H1 (cell line): ENCODE measurements at regions of chr14 and their contacts with region 1.

Region 1: DNA sequence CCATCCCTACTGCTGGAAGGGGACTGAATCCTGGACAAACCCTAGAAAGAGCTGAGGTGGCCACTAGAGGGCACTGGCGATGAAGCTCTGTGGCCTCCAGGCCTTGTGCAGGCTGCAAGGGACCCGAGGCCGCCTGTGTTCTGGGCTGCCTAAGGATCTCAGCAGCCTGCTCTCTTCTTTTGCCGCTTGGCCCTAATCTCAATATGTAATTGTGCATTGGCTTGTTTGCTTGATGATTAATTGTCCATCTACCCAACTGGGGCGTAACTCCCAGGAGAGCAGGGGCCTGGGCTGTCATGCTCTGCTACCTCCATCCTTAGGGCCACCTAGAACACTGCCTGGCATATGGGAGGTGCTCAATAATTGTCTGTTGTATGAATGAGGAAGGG is 73.8 kb downstream of the SYNE3 start:
- DNase-seq: peak; percentile 53 to 86
- H3K4me3 ChIP-seq: no peak overlapping the region
- H3K27ac ChIP-seq: no peak overlapping the region
- H3K4me1 ChIP-seq: no peaks in the 10 kb centered on the region
- H3K27me3 ChIP-seq: no peaks in the 10 kb centered on the region
- CTCF ChIP-seq: peak; percentile 85 to 94 (median 89)
- EP300 ChIP-seq: no peak
- POLR2A ChIP-seq: no peak
- RAD21 ChIP-seq: peak; percentile 89 to 92

Region 2: DNA sequence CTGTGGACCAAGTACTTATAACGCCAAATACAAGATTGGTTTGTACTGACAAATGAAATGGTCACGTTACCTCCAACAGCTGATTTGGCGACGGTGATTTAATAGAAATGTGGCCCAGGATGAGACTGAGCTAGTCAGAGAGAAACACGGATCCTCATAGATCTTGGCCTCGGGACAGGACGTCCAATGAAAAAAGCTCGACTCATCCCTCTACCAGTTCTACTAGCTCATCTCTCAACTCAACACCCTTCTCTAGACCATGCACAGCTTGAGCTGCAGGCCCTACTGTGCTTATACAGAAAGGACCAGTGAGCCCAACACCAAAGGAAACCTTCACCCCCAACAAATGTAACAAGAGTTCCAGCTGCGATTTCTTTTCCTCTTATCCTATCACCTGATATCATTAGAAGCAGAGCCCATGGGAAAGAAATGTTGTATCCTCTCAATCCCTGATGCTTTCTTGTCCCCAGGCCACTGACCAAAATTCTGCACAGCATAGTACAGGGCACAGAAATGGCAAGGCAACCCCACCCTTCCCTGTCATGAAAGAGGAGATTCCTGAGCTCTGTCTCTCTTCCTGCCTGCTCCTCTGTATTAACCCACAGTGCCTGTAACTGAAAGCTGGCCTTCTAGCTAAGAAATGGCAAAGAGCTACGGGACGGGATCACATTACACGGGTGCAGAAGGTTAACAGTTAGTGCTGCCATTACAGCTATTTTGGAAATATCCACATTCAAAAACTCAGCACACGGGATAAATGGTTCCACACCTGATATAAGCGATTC is 324.5 kb before region 1 on chr14:
- CTCF ChIA-PET with region 1: no interaction called
- POLR2A ChIA-PET with region 1: no interaction called
- DNase-seq: no peak
- H3K4me3 ChIP-seq: 0 out of 8 replicates have a peak overlapping the region, but pooled peaks of 1 of the 4 experiments have one; percentile 5
- H3K27ac ChIP-seq: no peak overlapping the region
- H3K4me1 ChIP-seq: peaks cover 0 to 5% (median 3%) of the 10 kb centered on the region in 4 experiments; a peak in 2 of 7 replicates
- H3K27me3 ChIP-seq: no peaks in the 10 kb centered on the region
- CTCF ChIP-seq: no peak
- EP300 ChIP-seq: no peak
- POLR2A ChIP-seq: no peak
- RAD21 ChIP-seq: no peak

Region 3: GRCh38 chr14:95340201-95340697 is 102.4 kb before region 1 on chr14:
- CTCF ChIA-PET with region 1: no interaction called
- POLR2A ChIA-PET with region 1: no interaction called
- DNase-seq: no peak
- H3K4me3 ChIP-seq: no peak overlapping the region
- H3K27ac ChIP-seq: no peak overlapping the region
- H3K4me1 ChIP-seq: peaks cover 0 to 4% (median 0%) of the 10 kb centered on the region in 4 experiments; a peak in 1 of 7 replicates
- H3K27me3 ChIP-seq: no peaks in the 10 kb centered on the region
- CTCF ChIP-seq: no peak
- EP300 ChIP-seq: no peak
- POLR2A ChIP-seq: no peak
- RAD21 ChIP-seq: no peak

Region 4: DNA sequence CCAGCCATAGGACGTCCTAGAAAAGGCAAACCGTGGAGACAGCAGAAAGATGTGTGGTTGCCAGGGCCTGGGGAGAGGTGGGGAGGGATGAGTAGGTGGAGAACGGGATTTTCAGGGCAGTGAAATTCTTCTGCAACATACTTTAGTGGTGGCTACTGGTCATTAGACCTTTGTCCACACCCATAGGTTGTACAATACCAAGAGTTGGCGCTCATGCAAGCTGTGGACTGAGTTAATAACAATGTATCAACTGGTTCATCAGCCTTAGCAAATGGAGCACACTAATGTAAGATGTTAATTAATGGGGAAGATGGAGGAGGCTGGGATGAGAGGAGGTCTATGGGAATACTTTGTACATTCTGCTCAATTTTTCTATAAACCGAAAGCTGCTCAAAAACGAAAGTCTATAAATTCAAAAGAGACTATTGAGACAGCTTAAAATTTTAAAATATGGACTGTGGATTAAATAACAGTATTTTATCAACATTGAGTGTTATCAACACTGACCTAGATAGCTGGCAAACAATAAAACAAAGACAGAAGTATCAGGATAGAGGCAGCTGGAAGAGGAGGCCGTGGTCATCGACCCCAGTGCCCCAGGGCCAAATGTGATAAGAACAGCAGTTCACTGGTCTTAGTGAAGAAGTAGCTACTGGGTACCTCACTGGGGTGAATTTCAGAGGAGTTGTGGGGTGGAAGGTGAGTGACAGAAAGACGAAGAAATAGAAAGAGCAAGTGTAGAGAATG is 17.1 kb before region 1 on chr14:
- CTCF ChIA-PET with region 1: interaction called, 10 read pairs
- POLR2A ChIA-PET with region 1: no interaction called
- DNase-seq: no peak
- H3K4me3 ChIP-seq: no peak overlapping the region
- H3K27ac ChIP-seq: no peak overlapping the region
- H3K4me1 ChIP-seq: no peaks in the 10 kb centered on the region
- H3K27me3 ChIP-seq: no peaks in the 10 kb centered on the region
- CTCF ChIP-seq: no peak
- EP300 ChIP-seq: no peak
- POLR2A ChIP-seq: no peak
- RAD21 ChIP-seq: no peak

Region 5: GRCh38 chr14:95431199-95432143 is 11.2 kb before region 1 on chr14:
- CTCF ChIA-PET with region 1: interaction called, 113 read pairs
- POLR2A ChIA-PET with region 1: no interaction called
- DNase-seq: peak in 1 of 2 experiments; percentile 63
- H3K4me3 ChIP-seq: no peak overlapping the region
- H3K27ac ChIP-seq: no peak overlapping the region
- H3K4me1 ChIP-seq: no peaks in the 10 kb centered on the region
- H3K27me3 ChIP-seq: no peaks in the 10 kb centered on the region
- CTCF ChIP-seq: peak; percentile 59 to 90 (median 78)
- EP300 ChIP-seq: no peak
- POLR2A ChIP-seq: no peak
- RAD21 ChIP-seq: peak; percentile 79 to 87

Region 6: GRCh38 chr14:95472819-95473251 is 30.2 kb after region 1 on chr14:
- CTCF ChIA-PET with region 1: interaction called, 13 read pairs
- POLR2A ChIA-PET with region 1: no interaction called
- DNase-seq: no peak
- H3K4me3 ChIP-seq: no peak overlapping the region
- H3K27ac ChIP-seq: no peak overlapping the region
- H3K4me1 ChIP-seq: no peaks in the 10 kb centered on the region; a peak in 1 of 7 replicates
- H3K27me3 ChIP-seq: no peaks in the 10 kb centered on the region
- CTCF ChIP-seq: no peak
- EP300 ChIP-seq: no peak
- POLR2A ChIP-seq: no peak
- RAD21 ChIP-seq: no peak

Region 7: GRCh38 chr14:95515596-95516552 is 73.2 kb after region 1 on chr14:
- CTCF ChIA-PET with region 1: interaction called, 10 read pairs
- POLR2A ChIA-PET with region 1: no interaction called
- DNase-seq: peak in 1 of 2 experiments; percentile 73
- H3K4me3 ChIP-seq: peak overlapping the region; percentile 31 to 66 (median 40)
- H3K27ac ChIP-seq: no peak overlapping the region
- H3K4me1 ChIP-seq: peaks cover 0 to 22% (median 8%) of the 10 kb centered on the region in 4 experiments; a peak in 5 of 7 replicates
- H3K27me3 ChIP-seq: peaks cover 4 to 33% (median 27%) of the 10 kb centered on the region in 4 experiments
- CTCF ChIP-seq: peak; percentile 11 to 38 (median 12)
- EP300 ChIP-seq: no peak
- POLR2A ChIP-seq: no peak
- RAD21 ChIP-seq: 0 out of 4 replicates have a peak, but pooled peaks have one; percentile 9 to 10

Region 8: DNA sequence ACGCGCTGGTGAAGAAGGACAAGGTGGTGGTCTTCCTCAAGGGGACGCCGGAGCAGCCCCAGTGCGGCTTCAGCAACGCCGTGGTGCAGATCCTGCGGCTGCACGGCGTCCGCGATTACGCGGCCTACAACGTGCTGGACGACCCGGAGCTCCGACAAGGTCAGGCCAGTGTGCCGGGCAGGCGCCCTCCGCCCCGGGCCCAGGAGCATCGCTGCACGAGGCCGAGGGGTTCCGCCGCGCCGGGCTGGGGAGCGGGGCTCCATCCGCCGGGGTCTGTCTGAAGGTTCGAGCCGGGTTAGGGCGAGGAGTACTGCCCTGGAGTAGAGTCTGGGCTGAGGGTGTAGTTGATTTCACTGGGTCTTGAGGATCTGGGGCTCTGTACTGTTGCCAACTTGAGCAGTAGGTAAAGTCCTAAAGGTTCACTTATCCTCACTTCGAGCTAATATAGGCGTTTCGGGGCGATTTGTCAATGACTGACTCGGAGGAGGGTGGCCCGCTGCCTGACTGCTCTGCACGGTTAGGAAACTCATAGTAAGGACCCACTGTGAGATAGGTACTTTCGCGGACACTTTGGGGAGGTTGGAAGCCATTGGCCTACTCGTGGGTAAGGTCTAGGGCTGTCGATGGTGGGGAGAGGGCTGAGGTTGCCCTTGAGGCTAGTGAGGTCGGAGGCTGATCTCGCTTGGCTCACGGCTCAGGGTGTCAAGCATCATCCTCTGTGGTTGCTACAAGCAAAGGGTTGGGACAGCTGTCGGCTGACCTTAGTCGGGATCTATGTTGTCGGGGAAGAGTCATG is 92.8 kb after region 1 on chr14:
- CTCF ChIA-PET with region 1: interaction called, 13 read pairs
- POLR2A ChIA-PET with region 1: interaction called, 5 read pairs
- DNase-seq: no peak
- H3K4me3 ChIP-seq: peak overlapping the region; percentile 57 to 98 (median 90)
- H3K27ac ChIP-seq: no peak overlapping the region
- H3K4me1 ChIP-seq: peaks cover 2 to 19% (median 3%) of the 10 kb centered on the region in 4 experiments
- H3K27me3 ChIP-seq: no peaks in the 10 kb centered on the region
- CTCF ChIP-seq: no peak
- EP300 ChIP-seq: no peak
- POLR2A ChIP-seq: no peak
- RAD21 ChIP-seq: no peak

Region 9: GRCh38 chr14:95609387-95609990 is 166.9 kb after region 1 on chr14:
- CTCF ChIA-PET with region 1: no interaction called
- POLR2A ChIA-PET with region 1: no interaction called
- DNase-seq: peak in 1 of 2 experiments; percentile 80
- H3K4me3 ChIP-seq: no peak overlapping the region
- H3K27ac ChIP-seq: no peak overlapping the region
- H3K4me1 ChIP-seq: no peaks in the 10 kb centered on the region; a peak in 1 of 7 replicates
- H3K27me3 ChIP-seq: peaks cover 0 to 4% (median 0%) of the 10 kb centered on the region in 4 experiments; a peak in 1 of 7 replicates
- CTCF ChIP-seq: peak; percentile 47 to 83 (median 82)
- EP300 ChIP-seq: no peak
- POLR2A ChIP-seq: no peak
- RAD21 ChIP-seq: peak; percentile 87 to 90